ENCODE measurements at regions of chr15 and their contacts with region 1.

Region 1: DNA sequence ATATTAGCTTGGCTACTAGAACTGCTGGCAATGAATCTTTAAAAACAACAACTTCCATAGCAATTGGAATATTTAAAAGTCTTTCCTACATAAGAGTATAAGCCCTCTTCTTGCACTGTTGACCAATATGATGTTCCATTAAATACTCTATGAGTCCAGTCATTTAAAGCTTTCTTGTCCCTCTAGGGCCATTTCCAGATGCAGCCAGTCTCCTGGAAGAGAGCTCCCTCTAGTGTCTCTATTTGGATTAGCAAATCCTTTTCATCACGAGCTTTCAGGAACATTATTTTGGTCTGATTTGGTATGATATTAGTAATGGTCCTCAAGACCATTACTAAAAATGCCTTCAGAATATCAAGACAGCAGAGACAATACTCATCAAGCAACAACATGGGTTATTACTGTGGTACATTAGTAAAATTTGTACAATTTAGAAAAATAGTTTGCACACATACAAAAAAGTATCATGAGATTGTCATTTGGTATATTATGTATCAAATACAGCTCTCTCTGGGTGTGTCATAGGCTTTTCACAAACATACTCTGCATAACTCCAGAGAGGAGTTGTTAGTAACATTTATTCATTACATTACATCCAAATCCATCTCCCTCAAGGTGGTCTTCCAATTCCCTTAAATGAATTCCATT is 101.3 kb downstream of the DPH6 start:
- DNase-seq: no peak
- ATAC-seq: no peak
- H3K4me3 ChIP-seq: no peak overlapping the region
- H3K27ac ChIP-seq: no peak overlapping the region
- H3K4me1 ChIP-seq: no peaks in the 10 kb centered on the region
- H3K27me3 ChIP-seq: no peaks in the 10 kb centered on the region

Region 2: GRCh38 chr15:35078221-35078915 is 366.3 kb before region 1 on chr15:
- intact Hi-C with region 1: loop called in 1 of 4 experiments (anchors 10 kb)
- DNase-seq: no peak
- ATAC-seq: peak in 1 of 2 donors; percentile 55
- H3K4me3 ChIP-seq: no peak overlapping the region
- H3K27ac ChIP-seq: no peak overlapping the region
- H3K4me1 ChIP-seq: no peaks in the 10 kb centered on the region
- H3K27me3 ChIP-seq: no peaks in the 10 kb centered on the region

Region 3: GRCh38 chr15:35289024-35289617 is 155.6 kb before region 1 on chr15:
- intact Hi-C with region 1: loop called (anchors 2 to 10 kb)
- DNase-seq: no peak
- ATAC-seq: peak in 1 of 2 donors; percentile 57
- H3K4me3 ChIP-seq: no peak overlapping the region
- H3K27ac ChIP-seq: no peak overlapping the region
- H3K4me1 ChIP-seq: no peaks in the 10 kb centered on the region
- H3K27me3 ChIP-seq: no peaks in the 10 kb centered on the region

Measured in right cardiac atrium (tissue), 5 donors.